Right ventricle myocardium superior (tissue), 1 donor: ENCODE measurements at regions of chr1 and their contacts with region 1.

Region 1: GRCh38 chr1:115771847-115772457 is 3.4 kb upstream of the CASQ2 start:
- DNase-seq: peak; percentile 68
- ATAC-seq: peak; percentile 77

Region 2: GRCh38 chr1:115609021-115609420 is 162.9 kb before region 1 on chr1:
- intact Hi-C with region 1: loop called (anchors 5 kb)
- DNase-seq: no peak
- ATAC-seq: no peak

Region 3: GRCh38 chr1:115727706-115728249 is 44.2 kb before region 1 on chr1:
- intact Hi-C with region 1: loop called (anchors 5 kb)
- DNase-seq: peak; percentile 82
- ATAC-seq: peak; percentile 87